ENCODE measurements at regions of chr2 and their contacts with region 1.

Region 1: DNA sequence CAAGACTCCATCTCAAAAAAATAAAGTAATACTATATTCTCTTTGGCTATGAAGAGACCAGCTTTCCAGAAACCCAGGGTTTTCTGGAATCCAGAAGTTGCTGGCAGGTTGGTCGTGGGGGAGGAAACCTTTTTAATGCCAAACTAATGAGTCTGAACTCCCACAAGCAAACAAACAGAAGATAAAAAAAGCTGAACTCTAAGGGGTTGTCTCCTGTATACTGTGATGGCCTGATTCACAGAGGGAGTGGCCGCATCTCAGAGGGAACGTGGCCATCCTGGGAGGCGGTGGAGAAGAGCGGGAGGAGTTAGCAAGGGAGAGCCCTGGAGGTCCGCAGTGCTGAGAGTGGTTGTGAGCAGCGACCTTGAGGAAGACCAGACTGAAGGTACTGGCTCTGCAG is 36.1 kb downstream of the LIMS1 start:
- DNase-seq: no peak
- ATAC-seq: no peak

Region 2: DNA sequence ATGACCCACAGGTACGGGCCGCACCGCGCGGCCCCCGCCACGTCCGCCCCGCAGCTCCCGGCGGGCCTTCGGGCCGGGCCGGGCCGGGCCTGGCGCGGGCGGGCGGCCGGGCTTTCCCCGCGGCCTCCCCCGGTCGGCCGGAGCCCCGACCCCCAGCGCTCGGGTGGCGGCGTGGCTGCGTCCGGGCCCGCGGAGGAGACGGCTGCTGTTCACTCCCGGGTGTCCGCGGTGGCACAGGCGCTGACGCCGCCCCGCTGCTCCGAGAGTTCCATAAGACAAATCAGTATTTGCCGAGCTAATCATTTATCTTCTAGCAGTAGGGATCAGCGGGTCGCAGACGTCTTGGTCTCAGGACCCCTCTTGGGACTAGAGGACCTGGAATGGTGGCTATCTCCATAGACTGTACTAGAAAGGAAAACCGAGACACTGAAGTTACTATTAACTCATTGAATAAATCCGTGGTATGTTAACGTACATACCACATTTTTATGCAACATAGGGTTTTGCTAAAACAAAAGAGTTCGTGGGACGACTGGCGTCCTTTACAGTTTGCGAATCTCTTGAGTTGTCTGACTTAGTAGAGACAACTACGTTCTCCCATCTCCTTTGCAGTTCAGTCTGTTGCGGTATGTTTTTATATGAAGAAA is 35.7 kb before region 1 on chr2:
- intact Hi-C with region 1: loop called (anchors 5 kb)
- DNase-seq: peak; percentile 67
- ATAC-seq: no peak

Region 3: GRCh38 chr2:108621087-108621559 is 50.7 kb after region 1 on chr2:
- intact Hi-C with region 1: no loop called
- DNase-seq: no peak
- ATAC-seq: peak; percentile 58

Region 4: DNA sequence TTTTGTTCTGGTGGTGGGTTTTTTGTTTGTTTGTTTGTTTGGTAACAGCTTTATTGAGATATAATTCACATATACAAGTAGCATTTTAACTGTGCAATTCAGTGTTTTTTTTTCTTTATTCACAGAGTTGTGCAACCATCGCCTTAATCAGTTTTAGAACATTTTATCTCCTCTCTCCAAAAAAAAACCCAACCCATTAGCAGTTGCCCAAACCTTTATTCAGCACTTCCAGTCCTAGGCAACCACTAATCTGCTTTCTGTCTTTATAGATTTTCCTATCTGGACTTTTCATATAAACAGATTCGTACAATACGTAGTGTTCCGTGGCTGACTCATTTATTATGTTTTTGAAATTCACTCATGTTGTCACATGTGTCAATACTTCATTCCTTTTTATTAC is 254.8 kb after region 1 on chr2:
- intact Hi-C with region 1: no loop called
- DNase-seq: no peak
- ATAC-seq: no peak